Endothelial cell of umbilical vein (primary cell): ENCODE measurements at regions of chr2 and their contacts with region 1.

Region 1: DNA sequence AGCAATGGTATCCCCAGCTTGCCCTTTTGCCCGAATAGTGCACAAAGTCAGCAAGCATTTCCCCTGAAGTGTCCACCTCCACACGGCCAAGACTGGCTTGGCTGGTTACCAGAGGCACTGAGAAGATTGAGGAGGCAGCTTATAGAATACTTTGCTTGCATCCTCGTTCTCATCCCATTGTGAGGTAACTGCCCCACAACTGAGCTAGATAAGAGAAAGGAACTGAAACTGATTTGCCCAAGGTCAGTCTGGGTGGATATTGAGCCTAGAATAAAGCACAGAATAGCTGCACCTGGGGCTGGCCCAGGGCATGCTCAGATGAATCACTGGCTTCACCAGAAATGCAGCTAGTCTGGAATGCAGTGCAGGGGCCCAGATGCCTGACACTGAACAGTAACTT is 32.7 kb upstream of the MAP4K3 start:
- DNase-seq: peak; percentile 73
- H3K4me3 ChIP-seq: no peak overlapping the region
- H3K27ac ChIP-seq: peak overlapping the region; percentile 49
- H3K4me1 ChIP-seq: peaks cover 36% of the 10 kb centered on the region
- H3K27me3 ChIP-seq: no peaks in the 10 kb centered on the region
- CTCF ChIP-seq: no peak
- POLR2A ChIP-seq: no peak

Region 2: GRCh38 chr2:38116762-38117161 is 1353.0 kb before region 1 on chr2:
- CTCF ChIA-PET with region 1: no interaction called
- POLR2A ChIA-PET with region 1: no interaction called
- dilution Hi-C with region 1: no loop called
- intact Hi-C with region 1: no loop called
- DNase-seq: no peak
- H3K4me3 ChIP-seq: no peak overlapping the region
- H3K27ac ChIP-seq: no peak overlapping the region
- H3K4me1 ChIP-seq: no peaks in the 10 kb centered on the region
- H3K27me3 ChIP-seq: peaks cover 6 to 10% of the 10 kb centered on the region in 2 experiments
- CTCF ChIP-seq: no peak
- POLR2A ChIP-seq: no peak

Region 3: GRCh38 chr2:39455826-39456225 is 14.0 kb before region 1 on chr2:
- CTCF ChIA-PET with region 1: interaction called, 4 read pairs
- POLR2A ChIA-PET with region 1: no interaction called
- dilution Hi-C with region 1: no loop called
- intact Hi-C with region 1: loop called (anchors 1 kb)
- DNase-seq: no peak
- H3K4me3 ChIP-seq: no peak overlapping the region
- H3K27ac ChIP-seq: no peak overlapping the region
- H3K4me1 ChIP-seq: no peaks in the 10 kb centered on the region
- H3K27me3 ChIP-seq: no peaks in the 10 kb centered on the region
- CTCF ChIP-seq: no peak
- POLR2A ChIP-seq: no peak

Region 4: GRCh38 chr2:39481611-39482010 is 11.8 kb after region 1 on chr2:
- CTCF ChIA-PET with region 1: interaction called, 13 read pairs
- POLR2A ChIA-PET with region 1: interaction called, 4 read pairs
- dilution Hi-C with region 1: no loop called
- intact Hi-C with region 1: loop called (anchors 1 kb)
- DNase-seq: peak; percentile 78
- H3K4me3 ChIP-seq: peak overlapping the region in 1 of 3 experiments; percentile 13
- H3K27ac ChIP-seq: peak overlapping the region; percentile 84
- H3K4me1 ChIP-seq: peaks cover 46% of the 10 kb centered on the region
- H3K27me3 ChIP-seq: no peaks in the 10 kb centered on the region
- CTCF ChIP-seq: no peak
- POLR2A ChIP-seq: no peak

Region 5: DNA sequence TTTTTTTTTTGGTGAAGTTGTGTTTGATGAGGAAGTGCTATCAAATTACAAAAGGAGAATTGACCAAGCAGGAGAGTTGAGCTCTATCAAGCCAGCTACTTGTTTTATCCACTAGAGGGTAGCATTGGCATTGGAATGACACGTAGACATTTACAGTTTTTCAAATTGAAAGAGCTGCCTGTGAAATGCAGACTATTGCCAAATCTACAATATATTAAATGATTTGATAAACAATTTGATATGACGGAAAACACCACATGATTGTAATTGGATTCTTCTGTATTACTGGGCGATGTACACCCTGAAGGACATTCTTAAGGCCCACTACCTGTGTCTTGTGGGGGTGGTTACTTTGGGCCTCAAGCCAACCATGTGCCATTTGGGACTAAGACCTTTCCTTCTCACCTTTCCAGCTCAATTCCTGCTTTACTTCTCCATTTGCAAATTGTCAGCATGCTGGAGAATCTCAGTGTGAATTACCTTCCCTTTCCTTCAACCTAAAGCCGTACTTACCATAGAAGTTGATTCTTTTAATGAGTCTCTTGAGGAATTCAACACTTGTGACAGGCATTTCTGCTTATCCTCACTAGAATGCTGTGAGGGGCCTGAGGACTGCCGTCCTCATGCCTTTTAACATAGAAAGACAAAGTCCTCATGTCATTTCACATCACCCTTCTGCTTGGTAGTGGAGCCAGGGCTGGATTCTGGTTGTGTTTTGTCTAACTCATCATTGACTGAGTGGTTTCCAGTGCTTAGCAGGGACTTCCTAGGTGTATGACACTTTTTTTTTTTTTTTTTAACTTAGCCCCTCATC is 444.0 kb after region 1 on chr2:
- CTCF ChIA-PET with region 1: no interaction called
- POLR2A ChIA-PET with region 1: no interaction called
- dilution Hi-C with region 1: no loop called
- intact Hi-C with region 1: no loop called
- DNase-seq: peak; percentile 71
- H3K4me3 ChIP-seq: no peak overlapping the region
- H3K27ac ChIP-seq: no peak overlapping the region
- H3K4me1 ChIP-seq: no peaks in the 10 kb centered on the region
- H3K27me3 ChIP-seq: no peaks in the 10 kb centered on the region
- CTCF ChIP-seq: peak; percentile 42 to 67
- POLR2A ChIP-seq: no peak